ENCODE measurements at regions of chr1 and their contacts with region 1.

Region 1: GRCh38 chr1:211939876-211940468 is 95.4 kb downstream of the INTS7 start:
- DNase-seq: no peak
- H3K4me3 ChIP-seq: no peak overlapping the region
- H3K27ac ChIP-seq: no peak overlapping the region
- H3K4me1 ChIP-seq: peaks cover 0 to 4% of the 10 kb centered on the region in 2 donors
- H3K27me3 ChIP-seq: no peaks in the 10 kb centered on the region
- CTCF ChIP-seq: no peak
- POLR2A ChIP-seq: no peak

Region 2: GRCh38 chr1:211830330-211831142 is 109.4 kb before region 1 on chr1 and contains the start of gene LPGAT1:
- intact Hi-C with region 1: loop called in 1 of 2 experiments (anchors 10 kb)
- DNase-seq: peak; percentile 67 to 84 (median 81)
- H3K4me3 ChIP-seq: peak within 1 kb of the TSS; percentile 64 to 97 (median 74)
- H3K27ac ChIP-seq: peak within 1 kb of the TSS; percentile 78 to 98 (median 91)
- H3K4me1 ChIP-seq: peaks cover 12 to 35% of the 10 kb centered on the region in 2 donors
- H3K27me3 ChIP-seq: no peaks in the 10 kb centered on the region
- CTCF ChIP-seq: peak; percentile 25 to 76 (median 64)
- POLR2A ChIP-seq: peak; percentile 48 to 66
- total RNA-seq, gene LPGAT1: 53.2 to 113 (median 86.7) TPM

Region 3: GRCh38 chr1:211991695-211992094 is 51.7 kb after region 1 on chr1:
- intact Hi-C with region 1: no loop called
- DNase-seq: no peak
- H3K4me3 ChIP-seq: no peak overlapping the region
- H3K27ac ChIP-seq: no peak overlapping the region
- H3K4me1 ChIP-seq: no peaks in the 10 kb centered on the region
- H3K27me3 ChIP-seq: no peaks in the 10 kb centered on the region
- CTCF ChIP-seq: no peak
- POLR2A ChIP-seq: no peak